ENCODE measurements at regions of chr16 and their contacts with region 1.

Region 1: GRCh38 chr16:30429678-30430427 is at the start of gene DCTPP1:
- DNase-seq: peak; percentile 99
- H3K4me3 ChIP-seq: peak within 1 kb of the TSS; percentile 66 to 88 (median 79)
- H3K27ac ChIP-seq: peak within 1 kb of the TSS; percentile 44
- H3K4me1 ChIP-seq: peaks cover 13% of the 10 kb centered on the region
- H3K27me3 ChIP-seq: no peaks in the 10 kb centered on the region
- CTCF ChIP-seq: peak; percentile 79 to 93
- total RNA-seq, gene DCTPP1: 23.3 to 72.8 TPM

Region 2: GRCh38 chr16:30445408-30446202 is 15.8 kb after region 1 on chr16 and contains the start of gene SEPHS2:
- CTCF ChIA-PET with region 1: interaction called, 5 read pairs
- dilution Hi-C with region 1: no loop called
- in situ Hi-C with region 1: no loop called
- intact Hi-C with region 1: loop called (anchors 1 kb)
- DNase-seq: peak; percentile 96
- H3K4me3 ChIP-seq: peak within 1 kb of the TSS; percentile 64 to 87 (median 73)
- H3K27ac ChIP-seq: peak within 1 kb of the TSS; percentile 81
- H3K4me1 ChIP-seq: peaks cover 11% of the 10 kb centered on the region
- H3K27me3 ChIP-seq: no peaks in the 10 kb centered on the region
- CTCF ChIP-seq: peak; percentile 15 to 53
- total RNA-seq, gene SEPHS2: 17.0 to 45.1 TPM

Region 3: DNA sequence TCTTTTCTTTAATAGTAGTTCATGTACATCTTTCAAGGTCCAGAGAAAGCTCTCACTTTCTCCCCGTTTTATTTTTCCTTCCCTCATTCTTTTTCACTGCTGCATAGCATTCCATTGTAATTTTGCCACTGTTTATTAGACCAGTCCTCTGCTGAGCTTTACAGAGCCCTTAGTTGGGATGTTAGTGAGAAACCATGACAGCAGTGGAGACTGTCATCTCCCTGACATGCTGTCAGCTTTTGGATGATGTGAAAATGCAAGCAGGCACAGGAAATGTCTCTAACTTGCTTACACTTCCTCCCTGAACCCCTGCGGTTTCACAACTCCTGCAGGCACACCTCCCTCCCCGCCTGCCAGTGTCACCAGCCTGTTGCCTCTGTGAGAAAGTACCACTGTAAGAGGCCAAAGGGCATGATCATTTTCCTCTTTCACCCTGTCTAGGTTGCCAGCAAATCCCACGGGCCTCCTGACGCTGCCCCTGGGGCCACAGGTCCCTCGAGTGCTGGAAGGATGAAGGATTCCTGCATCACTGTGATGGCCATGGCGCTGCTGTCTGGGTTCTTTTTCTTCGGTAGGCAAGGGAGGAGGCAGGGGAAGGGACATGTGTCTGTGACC is 42.6 kb after region 1 on chr16 and contains the start of gene ITGAL:
- CTCF ChIA-PET with region 1: no interaction called
- dilution Hi-C with region 1: no loop called
- in situ Hi-C with region 1: no loop called
- intact Hi-C with region 1: no loop called
- DNase-seq: no peak
- H3K4me3 ChIP-seq: no peak within 1 kb of the TSS
- H3K27ac ChIP-seq: no peak within 1 kb of the TSS
- H3K4me1 ChIP-seq: peaks cover 4% of the 10 kb centered on the region
- H3K27me3 ChIP-seq: peaks cover 2% of the 10 kb centered on the region
- CTCF ChIP-seq: no peak
- total RNA-seq, gene ITGAL: not detected

Region 4: GRCh38 chr16:30534368-30535105 is 104.7 kb after region 1 on chr16 and contains the start of gene ZNF747:
- CTCF ChIA-PET with region 1: interaction called, 9 read pairs
- dilution Hi-C with region 1: no loop called
- in situ Hi-C with region 1: no loop called
- intact Hi-C with region 1: loop called (anchors 1 kb)
- DNase-seq: peak; percentile 75
- H3K4me3 ChIP-seq: peak within 1 kb of the TSS; percentile 50 to 64 (median 57)
- H3K27ac ChIP-seq: peak within 1 kb of the TSS; percentile 71
- H3K4me1 ChIP-seq: peaks cover 15% of the 10 kb centered on the region
- H3K27me3 ChIP-seq: no peaks in the 10 kb centered on the region
- CTCF ChIP-seq: peak in 1 of 2 donors; percentile 7
- total RNA-seq, gene ZNF747: 6.7 to 11.0 TPM

Region 5: DNA sequence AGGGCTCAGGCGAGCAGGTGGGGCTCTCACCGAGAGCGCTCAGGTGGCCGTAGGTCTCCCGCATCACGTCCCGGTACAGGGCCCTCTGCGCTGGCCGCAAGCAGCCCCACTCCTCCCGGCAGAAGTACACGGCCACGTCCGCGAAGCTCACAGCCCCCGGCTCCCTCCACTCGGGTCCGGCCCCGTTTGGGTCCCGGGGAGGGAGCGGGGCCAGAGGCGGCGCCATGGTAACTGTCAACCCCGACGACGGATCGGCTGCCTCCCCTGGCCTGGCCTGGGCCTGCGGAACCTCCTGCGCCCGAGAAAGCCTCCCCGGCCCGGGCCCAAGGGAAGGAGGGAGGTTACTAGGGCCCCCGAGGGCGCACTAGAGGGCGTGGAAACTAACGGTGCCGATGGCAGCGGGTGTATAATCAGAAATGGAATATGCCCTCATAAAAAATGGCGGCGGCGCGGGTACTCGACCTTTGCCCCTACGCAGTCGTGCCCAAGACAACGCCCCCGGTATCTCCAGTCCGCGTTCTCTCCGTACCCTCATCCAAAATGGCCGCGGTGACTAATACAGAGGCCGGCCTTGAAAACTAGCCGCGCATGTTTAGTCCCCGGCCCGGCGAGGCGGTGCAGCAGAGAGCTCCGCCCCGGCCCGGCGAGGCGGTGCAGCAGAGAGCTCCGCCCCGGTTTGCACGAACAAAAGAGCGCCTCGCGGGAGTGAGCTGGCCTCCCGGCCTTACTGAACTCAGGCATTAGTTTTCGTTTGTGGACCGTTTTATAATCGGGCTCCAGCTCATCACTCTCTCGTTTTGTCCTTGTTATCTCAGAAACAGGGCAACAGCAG is 128.3 kb after region 1 on chr16 and contains the start of gene ZNF764:
- CTCF ChIA-PET with region 1: interaction called, 6 read pairs
- dilution Hi-C with region 1: no loop called
- in situ Hi-C with region 1: no loop called
- intact Hi-C with region 1: loop called (anchors 1 kb)
- DNase-seq: peak; percentile 98
- H3K4me3 ChIP-seq: peak within 1 kb of the TSS; percentile 77 to 93 (median 92)
- H3K27ac ChIP-seq: peak within 1 kb of the TSS; percentile 81
- H3K4me1 ChIP-seq: peaks cover 9% of the 10 kb centered on the region
- H3K27me3 ChIP-seq: no peaks in the 10 kb centered on the region
- CTCF ChIP-seq: no peak
- total RNA-seq, gene ZNF764: 5.5 to 6.6 TPM

Region 6: GRCh38 chr16:30602616-30603277 is 172.9 kb after region 1 on chr16:
- CTCF ChIA-PET with region 1: interaction called, 15 read pairs
- dilution Hi-C with region 1: no loop called
- in situ Hi-C with region 1: no loop called
- intact Hi-C with region 1: loop called (anchors 1 kb)
- DNase-seq: no peak
- H3K4me3 ChIP-seq: no peak overlapping the region
- H3K27ac ChIP-seq: no peak overlapping the region
- H3K4me1 ChIP-seq: peaks cover 3% of the 10 kb centered on the region
- H3K27me3 ChIP-seq: no peaks in the 10 kb centered on the region
- CTCF ChIP-seq: no peak

Region 7: GRCh38 chr16:30637942-30638341 is 208.1 kb after region 1 on chr16:
- CTCF ChIA-PET with region 1: no interaction called
- dilution Hi-C with region 1: no loop called
- in situ Hi-C with region 1: no loop called
- intact Hi-C with region 1: loop called (anchors 1 kb)
- DNase-seq: peak; percentile 54
- H3K4me3 ChIP-seq: no peak overlapping the region
- H3K27ac ChIP-seq: no peak overlapping the region
- H3K4me1 ChIP-seq: no peaks in the 10 kb centered on the region
- H3K27me3 ChIP-seq: no peaks in the 10 kb centered on the region
- CTCF ChIP-seq: peak; percentile 55 to 74